ENCODE measurements at regions of chr11 and their contacts with region 1.

Region 1: GRCh38 chr11:62645956-62646824 is at the start of gene GANAB:
- DNase-seq: peak; percentile 97
- H3K4me3 ChIP-seq: peak within 1 kb of the TSS; percentile 68 to 82 (median 80)
- H3K27ac ChIP-seq: peak within 1 kb of the TSS; percentile 63
- H3K4me1 ChIP-seq: peaks cover 12% of the 10 kb centered on the region
- H3K27me3 ChIP-seq: no peaks in the 10 kb centered on the region
- CTCF ChIP-seq: no peak
- total RNA-seq, gene GANAB: 180 to 258 TPM

Region 2: DNA sequence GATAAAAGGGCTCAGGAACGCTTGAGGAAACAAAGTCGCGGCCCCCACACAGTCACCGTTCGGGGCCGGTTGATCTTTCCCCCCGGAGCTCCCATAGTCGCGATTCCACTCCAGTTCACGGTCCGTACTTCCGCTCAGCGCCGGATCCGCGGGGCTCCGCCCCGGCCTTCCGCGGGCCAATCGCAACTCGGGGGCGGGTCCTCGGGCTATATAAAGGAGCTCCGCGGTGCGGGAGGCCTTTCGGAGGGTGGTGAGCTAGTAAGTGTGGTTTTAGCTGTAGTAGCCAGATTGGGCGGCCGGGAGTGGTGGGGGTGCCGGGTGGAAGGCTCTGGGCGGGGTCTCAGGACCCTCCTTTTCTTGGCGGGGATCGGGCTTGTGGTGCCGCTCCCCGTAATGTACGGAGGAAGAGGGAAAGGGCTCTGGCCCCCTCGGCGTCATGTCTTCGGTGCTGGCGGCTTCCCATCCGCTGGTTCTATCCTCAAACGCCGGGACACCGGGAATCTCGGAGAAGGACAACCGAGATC is 18.9 kb after region 1 on chr11 and contains the starts of genes C11orf98 and CSKMT:
- CTCF ChIA-PET with region 1: no interaction called
- dilution Hi-C with region 1: no loop called
- in situ Hi-C with region 1: no loop called
- intact Hi-C with region 1: loop called (anchors 2 kb)
- DNase-seq: peak; percentile 91
- H3K4me3 ChIP-seq: peak within 1 kb of the TSS; percentile 58 to 96 (median 83)
- H3K27ac ChIP-seq: peak within 1 kb of the TSS; percentile 65
- H3K4me1 ChIP-seq: peaks cover 15% of the 10 kb centered on the region
- H3K27me3 ChIP-seq: no peaks in the 10 kb centered on the region
- CTCF ChIP-seq: no peak
- total RNA-seq, gene C11orf98: 18.0 to 68.3 TPM
- total RNA-seq, gene CSKMT: 2.2 to 18.2 TPM

Region 3: GRCh38 chr11:62922658-62923431 is 276.7 kb after region 1 on chr11:
- CTCF ChIA-PET with region 1: no interaction called
- dilution Hi-C with region 1: no loop called
- in situ Hi-C with region 1: no loop called
- intact Hi-C with region 1: no loop called
- DNase-seq: no peak
- H3K4me3 ChIP-seq: no peak overlapping the region
- H3K27ac ChIP-seq: no peak overlapping the region
- H3K4me1 ChIP-seq: peaks cover 16% of the 10 kb centered on the region
- H3K27me3 ChIP-seq: peaks cover 36% of the 10 kb centered on the region
- CTCF ChIP-seq: peak; percentile 20 to 40

Measured in mammary epithelial cell (primary cell).